PC-3 (cell line): ENCODE measurements at regions of chr19 and their contacts with region 1.

Region 1: GRCh38 chr19:49640113-49640898 is at the start of gene RRAS:
- DNase-seq: peak; percentile 100
- ATAC-seq: peak; percentile 65
- H3K4me3 ChIP-seq: peak within 1 kb of the TSS; percentile 75
- H3K27ac ChIP-seq: peak within 1 kb of the TSS; percentile 97
- H3K4me1 ChIP-seq: peaks cover 52% of the 10 kb centered on the region
- H3K27me3 ChIP-seq: no peaks in the 10 kb centered on the region
- CTCF ChIP-seq: no peak
- total RNA-seq, gene RRAS: 24.0 and 32.0 TPM in 2 replicates

Region 2: GRCh38 chr19:49497047-49497788 is 143.1 kb before region 1 on chr19:
- CTCF ChIA-PET with region 1: no interaction called
- POLR2A ChIA-PET with region 1: no interaction called
- intact Hi-C with region 1: loop called (anchors 2 kb)
- DNase-seq: peak; percentile 65
- ATAC-seq: no peak
- H3K4me3 ChIP-seq: peak overlapping the region; percentile 94
- H3K27ac ChIP-seq: peak overlapping the region; percentile 72
- H3K4me1 ChIP-seq: peaks cover 19% of the 10 kb centered on the region
- H3K27me3 ChIP-seq: no peaks in the 10 kb centered on the region
- CTCF ChIP-seq: no peak

Region 3: DNA sequence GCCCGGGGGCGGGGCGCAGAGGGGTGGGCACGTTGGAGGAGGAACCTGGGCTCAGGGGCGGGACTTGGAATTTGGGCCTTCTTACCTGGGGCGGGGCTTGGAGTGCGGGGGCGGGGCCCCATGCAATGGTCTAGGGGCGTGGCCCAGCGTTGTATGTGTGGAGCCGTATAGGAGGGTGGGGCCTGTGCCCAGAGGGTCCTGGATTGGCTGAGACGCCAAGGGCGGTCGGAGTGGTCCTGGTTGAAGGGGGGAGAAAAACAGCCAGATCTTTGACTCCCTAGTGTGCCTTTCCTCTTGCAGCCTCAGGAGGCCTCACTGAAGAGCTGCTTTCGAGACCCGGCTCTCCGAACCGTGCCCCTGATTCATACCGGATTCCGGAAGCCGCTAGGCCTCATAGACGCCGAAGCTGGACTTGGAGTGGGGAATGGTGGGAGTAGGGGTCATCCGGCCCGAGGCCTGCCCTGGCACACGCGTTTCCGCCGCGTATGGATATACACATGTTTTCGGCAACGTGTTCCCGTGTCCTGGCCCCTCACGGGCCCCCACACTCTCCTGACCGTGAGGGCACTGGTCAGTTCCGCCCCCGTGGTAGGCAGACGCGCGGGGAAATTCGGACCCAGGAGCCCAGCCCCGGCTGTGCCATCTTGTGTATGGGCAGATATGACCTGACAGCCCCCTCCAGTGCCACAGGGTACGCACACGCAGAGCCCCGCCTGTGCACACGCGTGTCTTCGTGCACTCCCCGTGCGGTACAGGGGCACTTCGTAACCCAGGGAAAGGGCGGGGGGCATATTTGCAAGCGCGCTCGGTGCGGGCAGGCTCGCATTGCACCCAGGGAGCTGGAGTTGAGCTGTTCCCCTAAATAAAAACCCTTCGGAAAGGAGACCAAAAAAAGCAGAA is 50.0 kb before region 1 on chr19:
- CTCF ChIA-PET with region 1: no interaction called
- POLR2A ChIA-PET with region 1: interaction called, 9 read pairs
- intact Hi-C with region 1: loop called (anchors 1 kb)
- DNase-seq: peak; percentile 99
- ATAC-seq: peak; percentile 77
- H3K4me3 ChIP-seq: peak overlapping the region; percentile 70
- H3K27ac ChIP-seq: peak overlapping the region; percentile 85
- H3K4me1 ChIP-seq: peaks cover 7% of the 10 kb centered on the region; the same call in 1 of the 2 replicates
- H3K27me3 ChIP-seq: no peaks in the 10 kb centered on the region
- CTCF ChIP-seq: no peak

Region 4: DNA sequence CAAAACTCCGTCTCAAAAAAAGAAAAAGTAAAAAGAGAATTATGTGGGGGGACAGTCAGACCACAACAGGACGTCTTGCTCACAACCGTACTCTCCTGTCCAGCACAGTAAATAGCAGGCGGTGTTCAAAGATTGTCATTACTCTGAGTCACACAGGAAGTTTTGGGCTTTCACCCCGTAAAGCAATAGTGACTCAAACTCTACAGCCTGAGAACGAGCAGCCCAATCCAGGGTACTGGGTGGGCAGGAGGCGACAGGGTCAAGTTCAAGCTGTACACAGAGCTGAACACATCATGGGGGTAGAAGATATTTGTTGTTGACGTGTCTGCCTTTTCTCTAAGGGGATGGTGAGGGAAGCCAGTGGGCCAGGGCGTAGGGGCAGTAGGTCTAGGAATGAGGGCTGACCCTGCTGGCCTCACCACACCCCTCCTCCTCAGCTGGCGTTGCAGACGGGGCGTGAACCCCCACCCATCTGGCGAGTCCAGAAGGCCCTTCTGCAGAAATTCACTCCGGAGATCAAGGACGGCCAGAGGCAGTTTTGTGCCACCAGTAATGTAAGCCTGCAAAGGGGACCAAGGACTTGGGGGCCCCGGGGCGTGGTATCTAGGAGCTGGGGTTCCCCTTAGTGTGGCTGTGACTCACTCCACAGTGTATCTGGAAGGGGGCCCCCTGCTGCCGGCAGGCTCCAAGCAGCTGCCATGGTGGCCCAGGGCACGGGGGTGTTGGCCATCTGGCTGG is 26.0 kb before region 1 on chr19:
- CTCF ChIA-PET with region 1: no interaction called
- POLR2A ChIA-PET with region 1: interaction called, 4 read pairs
- intact Hi-C with region 1: loop called (anchors 1 kb)
- DNase-seq: peak; percentile 97
- ATAC-seq: peak; percentile 92
- H3K4me3 ChIP-seq: peak overlapping the region; percentile 39
- H3K27ac ChIP-seq: peak overlapping the region; percentile 92
- H3K4me1 ChIP-seq: peaks cover 29% of the 10 kb centered on the region
- H3K27me3 ChIP-seq: no peaks in the 10 kb centered on the region
- CTCF ChIP-seq: peak; percentile 45; the same call in 1 of the 2 replicates

Region 5: DNA sequence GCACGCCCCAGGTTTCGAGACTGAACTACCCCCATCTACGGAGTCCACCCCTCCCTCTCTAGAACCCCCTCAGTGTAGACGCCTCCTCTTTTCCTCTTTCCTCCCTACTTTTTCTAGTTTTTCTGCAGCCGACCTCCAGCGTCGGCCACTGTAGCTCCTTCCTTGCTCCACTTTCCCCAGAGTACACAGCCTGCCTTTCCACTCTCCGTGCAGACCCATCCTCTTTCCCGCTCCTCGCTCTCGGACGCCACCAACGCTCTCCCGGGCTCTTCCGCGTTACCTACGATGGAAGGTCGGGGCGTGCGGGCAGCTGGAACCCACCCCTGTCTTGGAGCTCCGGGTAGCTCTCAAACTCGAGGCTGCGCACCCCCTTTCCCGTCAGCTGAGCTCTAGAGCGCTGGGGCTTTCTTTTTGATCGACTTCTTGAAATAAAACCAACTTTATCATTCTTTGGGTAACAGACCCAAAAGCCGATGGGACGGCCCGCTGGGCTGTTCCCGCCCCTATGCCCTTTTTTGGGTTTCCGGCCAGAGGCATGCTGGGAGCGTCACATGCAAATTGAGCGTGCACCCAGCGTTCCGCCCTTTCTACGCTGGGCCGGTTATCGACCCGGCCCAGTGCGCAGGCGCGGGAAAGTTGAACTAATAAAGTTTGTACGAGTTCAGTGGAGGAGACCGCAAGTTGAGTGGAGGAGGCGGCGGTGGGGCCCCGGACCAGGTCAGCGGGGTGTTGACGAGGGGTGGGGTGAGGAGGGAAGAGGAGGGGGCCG is 25.2 kb after region 1 on chr19 and contains the starts of genes BCL2L12 and IRF3:
- CTCF ChIA-PET with region 1: no interaction called
- POLR2A ChIA-PET with region 1: interaction called, 7 read pairs
- intact Hi-C with region 1: loop called (anchors 1 kb)
- DNase-seq: peak; percentile 100
- ATAC-seq: peak; percentile 80
- H3K4me3 ChIP-seq: peak within 1 kb of the TSS; percentile 89
- H3K27ac ChIP-seq: peak within 1 kb of the TSS; percentile 60
- H3K4me1 ChIP-seq: peaks cover 18% of the 10 kb centered on the region
- H3K27me3 ChIP-seq: no peaks in the 10 kb centered on the region
- CTCF ChIP-seq: no peak
- total RNA-seq, gene BCL2L12: 82.5 and 104 TPM in 2 replicates
- total RNA-seq, gene IRF3: 223 and 236 TPM in 2 replicates

Region 6: DNA sequence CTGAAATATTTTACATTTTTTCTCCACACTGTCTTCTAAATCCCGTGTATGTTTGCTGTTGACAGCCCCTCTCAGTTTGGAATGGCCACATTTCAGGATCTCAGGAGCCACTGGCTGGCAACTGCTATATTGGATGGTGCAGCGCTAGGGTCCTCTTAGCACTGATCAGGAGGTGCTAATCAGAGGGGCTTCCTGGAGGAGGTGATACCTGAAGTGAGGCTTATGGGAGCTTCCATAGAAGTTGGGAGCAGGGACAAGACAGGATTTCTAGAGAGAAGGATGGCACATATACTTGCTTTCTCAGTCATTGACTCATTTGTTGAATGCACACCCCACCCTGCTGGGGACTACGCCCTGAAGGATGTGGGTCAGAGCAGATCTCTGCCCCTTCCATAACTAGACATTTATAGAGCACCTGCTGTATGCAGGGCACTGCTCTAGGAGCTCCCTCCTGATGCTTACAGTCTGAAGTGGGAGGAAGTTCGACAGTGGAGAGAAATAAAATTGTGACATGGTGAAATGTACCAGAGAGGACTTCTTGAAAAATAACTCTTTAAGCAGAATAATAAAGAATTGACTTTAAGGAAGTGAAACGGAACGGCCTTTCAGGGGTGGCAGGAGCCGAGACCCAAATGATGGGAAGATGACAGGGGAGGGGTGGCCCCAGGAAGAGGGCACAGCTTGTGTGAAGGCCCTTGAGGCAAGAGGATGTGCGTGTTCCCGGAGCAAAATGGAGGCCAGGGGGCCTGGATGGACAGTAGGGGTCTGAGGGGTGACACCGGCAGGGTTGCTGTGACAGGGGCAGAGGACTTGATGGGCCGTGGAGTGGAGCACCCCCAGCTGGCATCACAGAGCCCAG is 139.7 kb after region 1 on chr19:
- CTCF ChIA-PET with region 1: no interaction called
- POLR2A ChIA-PET with region 1: no interaction called
- intact Hi-C with region 1: no loop called
- DNase-seq: no peak
- ATAC-seq: no peak
- H3K4me3 ChIP-seq: no peak overlapping the region
- H3K27ac ChIP-seq: no peak overlapping the region
- H3K4me1 ChIP-seq: no peaks in the 10 kb centered on the region
- H3K27me3 ChIP-seq: no peaks in the 10 kb centered on the region
- CTCF ChIP-seq: no peak